ENCODE measurements at regions of chr13 and their contacts with region 1.

Region 1: GRCh38 chr13:108915634-108916512 is 286.5 kb downstream of the MYO16 start:
- DNase-seq: peak; percentile 52
- ATAC-seq: peak; percentile 93
- H3K4me3 ChIP-seq: peak overlapping the region; percentile 36
- H3K27ac ChIP-seq: peak overlapping the region; percentile 20; the same call in 1 of the 2 replicates
- H3K4me1 ChIP-seq: peaks cover 9% of the 10 kb centered on the region
- H3K27me3 ChIP-seq: no peaks in the 10 kb centered on the region
- CTCF ChIP-seq: no peak
- EP300 ChIP-seq: peak in 1 of 2 experiments; percentile 61; a peak in 2 of 4 replicates
- POLR2A ChIP-seq: 0 out of 2 replicates have a peak, but pooled peaks have one; percentile 38
- RAD21 ChIP-seq: no peak

Region 2: DNA sequence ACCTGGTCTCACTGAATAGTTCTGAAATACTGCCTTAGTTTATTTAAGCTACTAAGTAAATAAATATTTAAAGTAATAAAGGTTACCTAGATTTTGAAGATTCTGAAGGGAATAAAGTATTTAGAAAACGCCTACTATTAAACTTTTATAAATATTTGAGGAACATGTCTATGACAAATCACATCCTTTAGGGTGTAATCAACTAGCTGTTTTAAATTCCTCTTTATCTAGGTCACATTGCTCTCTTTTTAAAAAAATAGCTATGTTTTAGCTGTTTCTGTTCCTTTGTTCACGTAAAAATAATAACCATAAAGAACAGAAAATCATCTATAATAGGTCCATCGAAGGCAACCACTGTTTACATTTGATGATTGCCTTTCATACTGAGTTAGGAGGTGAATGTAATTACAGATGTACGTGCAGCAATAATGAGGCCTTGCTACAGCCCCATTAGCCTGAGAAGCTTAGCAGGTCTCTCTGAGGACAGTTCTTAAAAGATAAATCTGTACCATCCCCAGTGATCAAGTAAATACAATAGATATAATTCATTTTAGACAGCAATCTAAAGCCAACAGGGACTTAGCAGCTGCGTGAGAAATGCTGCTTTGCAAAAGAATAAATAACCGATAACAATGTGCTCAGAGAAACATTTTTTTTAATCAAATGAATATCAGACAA is 1150.0 kb before region 1 on chr13:
- CTCF ChIA-PET with region 1: no interaction called
- POLR2A ChIA-PET with region 1: no interaction called
- RAD21 ChIA-PET with region 1: no interaction called
- SMC1A ChIA-PET with region 1: no interaction called
- in situ Hi-C with region 1: no loop called
- intact Hi-C with region 1: no loop called
- DNase-seq: no peak
- ATAC-seq: no peak
- H3K4me3 ChIP-seq: no peak overlapping the region
- H3K27ac ChIP-seq: no peak overlapping the region
- H3K4me1 ChIP-seq: no peaks in the 10 kb centered on the region
- H3K27me3 ChIP-seq: no peaks in the 10 kb centered on the region
- CTCF ChIP-seq: no peak
- EP300 ChIP-seq: no peak
- POLR2A ChIP-seq: no peak
- RAD21 ChIP-seq: no peak

Region 3: GRCh38 chr13:108902557-108903155 is 13.2 kb before region 1 on chr13:
- CTCF ChIA-PET with region 1: interaction called, 17 read pairs
- POLR2A ChIA-PET with region 1: no interaction called
- RAD21 ChIA-PET with region 1: interaction called, 3 read pairs
- SMC1A ChIA-PET with region 1: interaction called, 14 read pairs
- in situ Hi-C with region 1: no loop called
- intact Hi-C with region 1: no loop called
- DNase-seq: no peak
- ATAC-seq: no peak
- H3K4me3 ChIP-seq: no peak overlapping the region
- H3K27ac ChIP-seq: no peak overlapping the region
- H3K4me1 ChIP-seq: no peaks in the 10 kb centered on the region
- H3K27me3 ChIP-seq: no peaks in the 10 kb centered on the region
- CTCF ChIP-seq: no peak
- EP300 ChIP-seq: no peak
- POLR2A ChIP-seq: no peak
- RAD21 ChIP-seq: no peak

Region 4: GRCh38 chr13:108929532-108930206 is 13.8 kb after region 1 on chr13:
- CTCF ChIA-PET with region 1: interaction called, 10 read pairs
- POLR2A ChIA-PET with region 1: no interaction called
- RAD21 ChIA-PET with region 1: no interaction called
- SMC1A ChIA-PET with region 1: no interaction called
- in situ Hi-C with region 1: no loop called
- intact Hi-C with region 1: no loop called
- DNase-seq: no peak
- ATAC-seq: no peak
- H3K4me3 ChIP-seq: no peak overlapping the region
- H3K27ac ChIP-seq: no peak overlapping the region
- H3K4me1 ChIP-seq: no peaks in the 10 kb centered on the region
- H3K27me3 ChIP-seq: no peaks in the 10 kb centered on the region
- CTCF ChIP-seq: no peak
- EP300 ChIP-seq: no peak
- POLR2A ChIP-seq: no peak
- RAD21 ChIP-seq: no peak